Activated T-helper 1 cell treated with anti-CD3 and anti-CD28 coated beads, Interleukin-12 subunit alpha, Interleukin-12 subunit beta, Interleukin-2, Interleukin-4 antibody, amounts not matched to agents 30 ng/mL and 10 ng/mL and 1 ng/mL, durations not matched to agents 14 hours and 24 hours and 36 hours (primary cell): ENCODE measurements at regions of chr7 and their contacts with region 1.

Region 1: GRCh38 chr7:92245487-92246362 is at the starts of genes ANKIB1 and KRIT1:
- DNase-seq: peak; percentile 81
- H3K4me3 Mint-ChIP-seq: peak within 1 kb of the TSS; percentile 94
- H3K27ac Mint-ChIP-seq: peak within 1 kb of the TSS; percentile 99
- H3K4me1 Mint-ChIP-seq: peaks cover 34% of the 10 kb centered on the region
- H3K27me3 Mint-ChIP-seq: no peaks in the 10 kb centered on the region
- total RNA-seq, gene ANKIB1: 60.9 and 61.8 TPM in 2 replicates
- total RNA-seq, gene KRIT1: 48.2 and 48.3 TPM in 2 replicates

Region 2: DNA sequence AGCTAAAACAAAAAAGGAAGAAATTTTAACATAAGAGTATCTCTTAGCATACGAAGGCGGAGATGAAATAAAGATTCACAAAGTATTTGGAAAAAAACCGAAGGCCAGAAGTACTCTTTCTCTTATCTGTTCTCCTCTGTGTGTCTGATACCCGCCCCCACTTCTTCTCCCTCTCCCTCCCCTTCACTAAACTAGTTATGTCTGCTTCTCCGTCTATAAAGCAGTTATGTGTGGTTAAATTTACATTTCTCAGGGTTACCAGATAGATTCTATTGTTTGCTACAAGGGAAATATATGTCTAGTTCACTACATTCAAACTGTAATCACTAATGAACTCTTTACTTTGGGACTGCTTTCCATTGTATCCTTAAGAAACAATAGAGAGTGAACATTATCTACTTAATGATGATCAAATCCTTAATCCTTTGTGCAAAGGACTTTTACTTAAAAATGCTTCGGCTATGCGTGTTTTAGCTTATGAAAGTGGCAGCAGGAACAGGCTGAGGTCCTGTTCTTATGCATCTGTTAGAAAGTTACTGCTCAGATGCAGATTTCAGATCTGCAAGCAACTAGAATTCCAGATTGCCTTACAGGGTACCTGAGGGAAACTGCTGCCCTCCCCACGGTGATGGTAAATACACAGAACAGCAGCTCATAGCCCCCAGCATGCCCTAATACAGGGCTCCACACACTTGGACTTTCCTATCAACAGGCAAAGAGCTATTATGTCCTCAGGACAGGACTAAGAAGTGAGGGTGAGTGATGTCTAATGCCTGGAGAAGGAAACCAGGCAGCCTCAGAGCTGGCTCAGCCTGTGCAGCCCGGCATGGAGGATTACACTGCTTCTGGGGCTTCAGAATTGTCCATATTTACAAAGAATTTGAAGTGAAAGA is 708.2 kb before region 1 on chr7:
- intact Hi-C with region 1: no loop called
- DNase-seq: no peak
- H3K4me3 Mint-ChIP-seq: no peak overlapping the region
- H3K27ac Mint-ChIP-seq: no peak overlapping the region
- H3K4me1 Mint-ChIP-seq: no peaks in the 10 kb centered on the region
- H3K27me3 Mint-ChIP-seq: no peaks in the 10 kb centered on the region

Region 3: DNA sequence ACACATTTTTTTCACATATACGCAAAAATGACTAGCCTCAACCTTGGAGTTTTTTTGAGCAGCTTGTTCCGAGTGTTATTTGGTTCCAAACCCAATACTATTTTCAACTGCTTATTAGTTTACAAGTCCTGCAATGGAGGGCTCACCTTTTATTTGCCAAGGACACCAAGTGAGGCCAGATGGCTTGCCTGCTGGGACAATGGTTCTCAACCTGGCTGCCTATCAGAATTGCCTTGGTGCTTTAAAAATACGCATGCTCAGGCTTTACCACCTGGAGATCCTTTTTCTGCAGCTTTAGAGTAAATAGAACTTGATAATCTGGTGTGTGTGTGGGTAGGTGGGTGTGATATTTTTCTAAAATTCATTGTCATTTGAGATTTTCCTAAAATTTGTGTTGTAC is 642.0 kb before region 1 on chr7:
- intact Hi-C with region 1: no loop called
- DNase-seq: no peak
- H3K4me3 Mint-ChIP-seq: no peak overlapping the region
- H3K27ac Mint-ChIP-seq: no peak overlapping the region
- H3K4me1 Mint-ChIP-seq: no peaks in the 10 kb centered on the region
- H3K27me3 Mint-ChIP-seq: peaks cover 4% of the 10 kb centered on the region

Region 4: DNA sequence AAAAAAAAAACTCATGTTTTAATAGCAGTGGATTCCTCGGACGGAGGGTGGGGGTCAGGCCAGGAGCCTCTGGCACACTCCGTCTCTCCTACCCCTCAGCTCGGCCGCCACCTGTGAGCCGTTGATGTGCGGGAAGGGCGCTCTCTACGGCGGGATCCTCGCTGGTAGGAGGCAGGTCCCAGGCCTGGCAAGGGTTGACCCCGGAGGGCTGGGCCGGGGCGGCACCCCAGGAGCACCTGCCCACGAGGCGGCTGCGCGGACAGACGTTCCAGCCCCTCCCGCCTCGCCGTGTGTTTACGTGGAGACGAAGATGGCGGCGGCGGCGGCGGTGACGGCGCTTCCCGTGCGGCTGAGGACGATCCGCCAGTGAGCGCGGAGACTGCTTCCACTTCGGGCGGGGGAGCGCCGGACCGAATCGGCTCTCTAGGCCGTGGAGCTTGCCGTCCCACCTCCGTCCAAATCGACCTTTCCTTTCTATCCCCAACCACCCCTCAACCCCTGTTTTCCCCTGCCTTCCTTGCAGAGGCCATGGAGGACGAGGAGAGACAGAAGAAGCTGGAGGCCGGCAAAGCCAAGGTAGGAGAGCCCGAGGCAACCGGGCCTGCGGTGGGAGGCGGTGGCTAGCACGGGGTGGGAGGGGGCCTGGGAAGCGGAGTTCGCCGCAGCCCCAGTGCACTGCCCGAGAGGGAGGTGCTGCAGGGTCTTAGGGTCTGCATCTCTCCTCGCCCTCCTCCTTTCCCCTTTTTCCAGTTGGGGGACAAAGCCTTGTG is 305.0 kb before region 1 on chr7 and contains the start of gene AKAP9:
- intact Hi-C with region 1: loop called (anchors 2 kb)
- DNase-seq: peak; percentile 87
- H3K4me3 Mint-ChIP-seq: peak within 1 kb of the TSS; percentile 88
- H3K27ac Mint-ChIP-seq: peak within 1 kb of the TSS; percentile 97
- H3K4me1 Mint-ChIP-seq: peaks cover 30% of the 10 kb centered on the region
- H3K27me3 Mint-ChIP-seq: peaks cover 11% of the 10 kb centered on the region
- total RNA-seq, gene AKAP9: 34.1 and 36.1 TPM in 2 replicates

Region 5: DNA sequence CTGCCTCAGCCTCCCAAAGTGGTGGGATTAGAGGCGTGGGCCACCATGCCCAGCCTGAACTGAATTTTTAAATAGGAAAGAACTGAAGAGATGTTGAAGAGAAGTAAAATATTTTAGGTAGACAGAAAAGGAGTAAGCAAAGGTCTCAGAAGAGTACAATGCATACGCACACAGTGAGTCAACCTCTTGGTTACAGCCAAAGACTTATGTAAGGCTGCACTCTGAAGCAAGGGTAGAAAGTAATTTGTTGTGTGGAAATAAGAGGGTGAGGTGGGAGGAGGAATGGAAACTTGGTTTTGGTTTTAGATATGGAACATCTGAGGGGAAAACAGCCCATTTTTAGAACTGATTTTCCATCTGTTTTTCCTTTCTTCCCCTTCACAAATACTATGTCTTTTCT is 17.6 kb before region 1 on chr7:
- intact Hi-C with region 1: loop called (anchors 1 kb)
- DNase-seq: no peak
- H3K4me3 Mint-ChIP-seq: no peak overlapping the region
- H3K27ac Mint-ChIP-seq: peak overlapping the region; percentile 81
- H3K4me1 Mint-ChIP-seq: peaks cover 24% of the 10 kb centered on the region
- H3K27me3 Mint-ChIP-seq: no peaks in the 10 kb centered on the region

Region 6: DNA sequence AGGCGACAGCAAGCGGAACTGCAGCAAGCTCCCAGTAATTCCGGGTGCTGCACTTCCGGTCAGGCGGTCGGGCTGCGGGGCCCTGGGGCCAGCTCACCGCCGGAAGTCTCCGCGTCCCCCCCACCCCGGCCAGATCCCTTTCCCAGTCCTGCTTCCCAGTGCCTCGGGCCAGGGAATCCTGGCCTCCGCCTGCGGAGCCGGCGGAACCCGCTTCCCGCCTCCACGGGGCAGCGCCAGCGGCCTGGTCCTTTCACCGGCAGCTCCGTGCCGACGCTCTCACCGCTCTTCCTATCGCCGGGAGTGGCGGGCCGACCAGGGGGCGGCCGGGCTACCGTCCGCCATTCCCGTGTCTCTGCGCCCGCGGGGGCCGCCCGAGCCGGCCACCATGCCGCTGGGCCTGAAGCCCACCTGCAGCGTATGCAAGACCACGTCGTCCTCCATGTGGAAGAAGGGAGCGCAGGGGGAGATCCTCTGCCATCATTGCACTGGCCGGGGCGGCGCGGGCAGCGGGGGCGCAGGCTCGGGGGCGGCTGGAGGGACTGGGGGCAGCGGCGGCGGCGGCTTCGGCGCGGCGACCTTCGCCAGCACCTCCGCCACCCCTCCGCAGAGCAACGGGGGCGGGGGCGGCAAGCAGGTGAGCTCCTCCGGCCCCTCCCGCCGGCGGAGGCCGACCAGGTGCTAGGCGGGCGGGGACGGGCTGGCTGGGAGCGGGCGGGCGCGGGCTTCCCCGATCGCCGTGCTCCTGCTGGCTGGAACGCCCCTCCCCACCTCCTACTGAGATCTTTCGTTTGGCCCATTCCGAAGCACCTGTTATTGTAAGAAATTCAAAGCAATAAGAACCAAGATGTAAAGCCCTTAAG is 201.8 kb after region 1 on chr7 and contains the start of gene GATAD1:
- intact Hi-C with region 1: loop called (anchors 1 kb)
- DNase-seq: peak; percentile 79
- H3K4me3 Mint-ChIP-seq: peak within 1 kb of the TSS; percentile 89
- H3K27ac Mint-ChIP-seq: peak within 1 kb of the TSS; percentile 92
- H3K4me1 Mint-ChIP-seq: peaks cover 15% of the 10 kb centered on the region
- H3K27me3 Mint-ChIP-seq: no peaks in the 10 kb centered on the region
- total RNA-seq, gene GATAD1: 18.4 and 18.8 TPM in 2 replicates

Region 7: GRCh38 chr7:92517631-92518030 is 271.9 kb after region 1 on chr7:
- intact Hi-C with region 1: no loop called
- DNase-seq: no peak
- H3K4me3 Mint-ChIP-seq: no peak overlapping the region
- H3K27ac Mint-ChIP-seq: no peak overlapping the region
- H3K4me1 Mint-ChIP-seq: no peaks in the 10 kb centered on the region
- H3K27me3 Mint-ChIP-seq: no peaks in the 10 kb centered on the region

Region 8: GRCh38 chr7:93055543-93056107 is 809.9 kb after region 1 on chr7:
- intact Hi-C with region 1: loop called (anchors 10 kb)
- DNase-seq: no peak
- H3K4me3 Mint-ChIP-seq: no peak overlapping the region
- H3K27ac Mint-ChIP-seq: no peak overlapping the region
- H3K4me1 Mint-ChIP-seq: peaks cover 19% of the 10 kb centered on the region
- H3K27me3 Mint-ChIP-seq: peaks cover 6% of the 10 kb centered on the region

Region 9: DNA sequence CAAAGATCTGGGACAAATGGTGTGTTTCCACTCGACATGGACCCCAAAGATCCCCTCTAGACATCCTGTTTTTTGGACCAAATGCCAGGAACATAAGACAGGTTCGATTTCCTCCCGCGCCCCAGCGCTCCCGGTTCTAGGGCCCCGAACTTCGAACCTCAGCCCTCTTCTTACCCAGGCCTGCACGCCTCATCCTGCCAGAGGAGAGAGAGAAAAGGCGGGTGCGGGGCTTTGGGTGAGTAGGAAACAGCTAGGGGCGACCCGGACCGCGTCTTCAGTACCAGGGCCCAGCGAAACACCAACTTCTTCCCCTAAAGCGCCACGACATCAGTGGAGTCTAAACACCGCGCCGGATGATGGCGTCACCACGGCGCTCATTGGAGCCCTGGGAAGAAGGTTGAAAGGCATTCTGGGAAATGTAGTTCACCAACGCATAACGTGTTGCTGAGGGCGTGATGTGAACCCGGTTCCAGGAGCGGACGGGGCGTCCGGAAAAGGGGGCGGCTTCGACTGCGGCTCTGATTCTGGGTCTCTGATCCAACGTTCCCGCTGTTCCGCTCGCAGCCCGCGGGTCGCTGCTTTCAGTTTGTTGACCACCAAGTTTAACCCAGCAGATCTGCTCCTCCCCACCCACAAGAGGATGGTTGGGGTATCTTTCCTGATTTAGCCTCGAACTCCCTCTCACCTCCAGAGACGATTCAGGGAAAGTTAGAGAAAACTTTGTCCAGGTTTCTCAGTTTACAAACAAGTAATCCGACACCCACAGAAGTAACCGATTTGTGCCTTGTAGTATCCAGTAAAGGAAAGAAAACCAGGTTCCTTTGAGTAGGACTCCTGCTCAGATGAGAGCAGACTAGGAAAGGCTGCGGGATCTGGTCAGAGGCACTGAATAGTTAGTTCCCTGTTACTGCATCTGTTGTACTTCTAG is 1758.6 kb after region 1 on chr7 and contains the start of gene BET1:
- intact Hi-C with region 1: loop called (anchors 2 kb)
- DNase-seq: peak; percentile 88
- H3K4me3 Mint-ChIP-seq: peak within 1 kb of the TSS; percentile 97
- H3K27ac Mint-ChIP-seq: peak within 1 kb of the TSS; percentile 97
- H3K4me1 Mint-ChIP-seq: peaks cover 35% of the 10 kb centered on the region
- H3K27me3 Mint-ChIP-seq: peaks cover 4% of the 10 kb centered on the region
- total RNA-seq, gene BET1: 21.4 and 21.6 TPM in 2 replicates